MCF 10A (cell line): ENCODE measurements at regions of chr12 and their contacts with region 1.

Region 1: GRCh38 chr12:64890873-64891468 is 66.5 kb downstream of the TBC1D30 start:
- DNase-seq: peak; percentile 71
- H3K4me3 Mint-ChIP-seq: no peak overlapping the region
- H3K27ac Mint-ChIP-seq: no peak overlapping the region
- H3K4me1 Mint-ChIP-seq: peaks cover 6% of the 10 kb centered on the region
- H3K27me3 Mint-ChIP-seq: peaks cover 15% of the 10 kb centered on the region
- CTCF ChIP-seq: peak; percentile 58

Region 2: DNA sequence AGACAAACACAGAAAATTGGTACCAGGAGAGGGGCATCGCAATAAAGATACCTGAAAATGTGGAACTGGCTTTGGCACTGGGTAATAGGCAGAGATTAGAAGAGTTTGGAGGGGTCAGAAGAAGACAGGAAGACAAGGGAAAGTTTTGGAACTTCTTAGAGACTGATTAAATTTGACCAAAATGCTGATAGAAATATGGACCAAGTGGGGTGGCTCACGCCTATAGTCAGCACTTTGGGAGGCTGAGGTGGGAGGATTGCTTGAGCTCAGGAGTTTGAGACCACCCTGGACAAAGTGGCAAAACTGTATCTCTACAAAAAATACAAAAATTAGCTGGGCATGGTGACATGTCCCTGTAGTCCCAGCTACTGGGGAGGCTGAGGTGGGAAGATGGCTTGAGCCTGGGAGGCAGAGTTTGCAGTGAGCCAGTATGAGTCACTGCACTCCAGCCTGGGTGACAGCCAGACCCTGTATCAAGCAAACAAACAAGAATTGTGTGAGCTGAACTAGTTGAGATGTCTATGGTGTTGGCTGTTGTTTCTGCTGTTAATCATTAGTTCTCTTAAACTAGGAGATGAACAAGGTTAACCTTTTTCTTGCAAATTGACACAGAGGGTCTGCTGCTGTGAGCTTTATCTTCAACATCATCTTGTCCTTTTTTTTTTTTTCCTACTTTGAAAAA is 257.2 kb before region 1 on chr12:
- CTCF ChIA-PET with region 1: no interaction called
- POLR2A ChIA-PET with region 1: no interaction called
- intact Hi-C with region 1: no loop called
- DNase-seq: peak; percentile 73
- H3K4me3 Mint-ChIP-seq: no peak overlapping the region
- H3K27ac Mint-ChIP-seq: no peak overlapping the region
- H3K4me1 Mint-ChIP-seq: peaks cover 30% of the 10 kb centered on the region
- H3K27me3 Mint-ChIP-seq: no peaks in the 10 kb centered on the region
- CTCF ChIP-seq: no peak

Region 3: DNA sequence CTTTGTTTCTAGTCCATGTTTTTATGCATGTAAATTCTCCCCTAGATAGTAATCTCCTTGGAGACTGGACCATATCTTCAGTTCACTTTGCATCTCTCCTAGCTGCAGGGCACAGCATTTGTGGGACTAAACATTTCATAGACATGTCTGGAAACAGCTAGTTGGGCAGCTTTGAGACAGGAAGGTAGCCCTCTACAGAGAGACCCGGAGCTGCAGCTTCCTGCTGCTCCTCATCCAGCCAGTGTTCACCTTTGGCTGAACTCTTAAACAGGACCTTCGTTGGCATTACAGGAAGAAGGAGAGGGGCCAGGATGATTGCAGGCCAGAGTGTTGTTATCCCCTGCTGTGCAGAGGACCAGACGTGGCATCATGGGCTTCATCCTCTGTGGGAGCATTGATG is 184.7 kb before region 1 on chr12:
- CTCF ChIA-PET with region 1: no interaction called
- POLR2A ChIA-PET with region 1: no interaction called
- intact Hi-C with region 1: no loop called
- DNase-seq: no peak
- H3K4me3 Mint-ChIP-seq: no peak overlapping the region
- H3K27ac Mint-ChIP-seq: no peak overlapping the region
- H3K4me1 Mint-ChIP-seq: no peaks in the 10 kb centered on the region
- H3K27me3 Mint-ChIP-seq: no peaks in the 10 kb centered on the region
- CTCF ChIP-seq: no peak

Region 4: GRCh38 chr12:64796208-64796845 is 94.6 kb before region 1 on chr12:
- CTCF ChIA-PET with region 1: interaction called, 37 read pairs
- POLR2A ChIA-PET with region 1: no interaction called
- intact Hi-C with region 1: no loop called
- DNase-seq: peak; percentile 92
- H3K4me3 Mint-ChIP-seq: no peak overlapping the region
- H3K27ac Mint-ChIP-seq: no peak overlapping the region
- H3K4me1 Mint-ChIP-seq: peaks cover 5% of the 10 kb centered on the region
- H3K27me3 Mint-ChIP-seq: no peaks in the 10 kb centered on the region
- CTCF ChIP-seq: peak; percentile 65

Region 5: DNA sequence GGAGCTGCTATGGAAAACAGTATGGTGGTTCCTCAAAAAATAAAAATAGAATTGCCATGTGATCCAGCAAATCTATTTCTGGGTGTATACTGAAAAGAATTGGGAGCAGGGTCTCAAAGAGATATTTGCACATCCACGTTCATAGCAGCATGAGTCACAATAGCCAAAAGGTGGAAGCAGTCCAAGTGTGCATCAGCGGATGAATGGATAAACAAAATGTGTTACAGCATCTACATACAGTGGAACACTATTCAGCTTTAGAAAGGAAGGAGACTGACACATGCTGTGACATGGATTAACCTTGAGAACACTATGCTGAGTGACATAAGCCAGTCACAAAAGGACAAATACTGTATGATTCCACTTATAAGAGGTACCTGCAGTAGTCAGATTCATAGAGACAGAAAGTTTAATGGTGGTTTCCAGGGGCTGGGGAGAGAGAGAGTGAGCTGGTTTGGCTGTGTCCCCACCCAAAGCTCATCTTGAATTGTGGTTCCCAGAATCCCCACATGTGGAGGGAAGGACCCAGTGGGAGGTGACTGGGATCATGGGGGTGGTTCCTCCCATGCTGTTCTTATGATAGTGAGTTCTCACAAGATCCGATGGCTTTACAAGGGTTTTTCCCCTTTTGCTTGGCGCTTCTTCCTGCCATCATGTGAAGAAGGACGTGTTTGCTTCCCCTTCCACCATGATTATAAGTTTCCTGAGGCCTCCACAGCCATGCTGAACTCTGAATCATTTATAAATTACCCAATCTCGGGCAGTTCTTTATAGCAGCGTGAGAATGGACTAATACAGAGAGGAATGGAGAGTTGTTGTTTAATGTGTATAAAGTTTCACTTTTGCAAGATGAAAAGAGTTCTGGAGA is 84.1 kb before region 1 on chr12:
- CTCF ChIA-PET with region 1: interaction called, 37 read pairs
- POLR2A ChIA-PET with region 1: interaction called, 4 read pairs
- intact Hi-C with region 1: loop called (anchors 1 kb)
- DNase-seq: peak; percentile 93
- H3K4me3 Mint-ChIP-seq: no peak overlapping the region
- H3K27ac Mint-ChIP-seq: peak overlapping the region; percentile 46
- H3K4me1 Mint-ChIP-seq: peaks cover 36% of the 10 kb centered on the region
- H3K27me3 Mint-ChIP-seq: no peaks in the 10 kb centered on the region
- CTCF ChIP-seq: no peak

Region 6: DNA sequence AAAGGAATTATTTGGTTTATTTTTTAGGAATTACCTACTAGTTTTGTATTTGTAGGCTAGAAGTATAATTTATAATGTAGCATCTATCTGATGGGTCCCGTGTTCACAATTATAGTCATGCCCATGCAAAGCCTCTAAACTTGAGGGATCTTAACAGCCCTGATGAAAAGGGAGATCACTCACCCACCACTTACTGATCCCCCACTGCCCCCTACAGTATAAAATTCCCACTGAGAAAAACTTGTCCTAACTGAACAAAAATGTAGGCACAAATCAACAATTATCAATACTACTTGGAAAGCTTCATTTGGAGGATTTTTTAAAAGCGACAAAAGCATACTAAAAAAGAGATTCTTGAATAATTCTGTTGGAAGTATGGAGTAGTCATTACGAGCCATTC is 209.2 kb after region 1 on chr12:
- CTCF ChIA-PET with region 1: interaction called, 131 read pairs
- POLR2A ChIA-PET with region 1: interaction called, 3 read pairs
- intact Hi-C with region 1: loop called (anchors 1 kb)
- DNase-seq: peak; percentile 22
- H3K4me3 Mint-ChIP-seq: no peak overlapping the region
- H3K27ac Mint-ChIP-seq: no peak overlapping the region
- H3K4me1 Mint-ChIP-seq: no peaks in the 10 kb centered on the region
- H3K27me3 Mint-ChIP-seq: peaks cover 63% of the 10 kb centered on the region
- CTCF ChIP-seq: peak; percentile 15

Region 7: DNA sequence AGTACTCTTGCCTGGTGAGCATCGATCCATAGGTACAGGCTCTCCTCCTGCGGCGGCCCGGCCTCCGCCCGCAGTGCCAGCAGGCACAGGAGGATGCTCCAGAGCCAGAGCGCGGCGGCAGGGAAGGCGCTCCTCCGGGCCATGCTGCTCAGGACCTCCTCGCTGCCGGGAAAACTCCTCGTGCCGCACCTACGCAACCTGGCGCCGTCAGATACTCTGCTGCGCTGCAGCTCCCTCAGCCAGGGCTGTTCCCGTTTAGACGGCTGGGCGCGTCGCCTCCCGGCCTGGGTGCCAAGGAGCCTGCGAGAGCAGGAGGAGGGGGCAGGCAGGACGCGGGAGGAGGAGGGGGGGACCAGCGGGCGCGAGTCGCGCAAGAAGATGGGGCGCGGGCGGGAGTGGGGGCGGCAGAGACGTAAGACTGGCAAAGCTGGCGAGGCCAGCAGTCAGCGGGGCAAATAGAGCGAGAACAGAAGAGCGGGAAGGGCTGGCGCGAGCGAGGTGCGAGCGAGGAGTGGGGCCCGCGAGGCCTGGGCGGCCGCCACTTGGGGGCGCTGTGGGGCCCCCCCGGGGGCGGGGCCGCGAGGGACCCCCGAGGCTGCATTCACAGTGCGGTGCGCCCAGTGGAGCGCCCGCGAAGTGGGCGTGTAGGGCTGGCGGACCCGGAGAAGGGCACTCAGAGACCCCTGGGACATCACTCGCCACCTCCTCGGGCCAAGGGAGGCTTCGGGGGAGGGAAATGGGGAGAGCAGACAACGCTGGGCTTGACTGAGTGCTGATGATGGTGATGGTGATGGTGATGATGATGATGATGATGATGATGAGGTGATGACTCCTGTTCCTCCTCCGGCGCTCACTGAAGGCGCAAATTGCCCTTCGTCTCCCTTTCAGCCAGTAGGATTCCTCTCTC is 230.3 kb after region 1 on chr12 and contains the start of gene WIF1:
- CTCF ChIA-PET with region 1: interaction called, 86 read pairs
- POLR2A ChIA-PET with region 1: interaction called, 3 read pairs
- intact Hi-C with region 1: loop called (anchors 1 kb)
- DNase-seq: no peak
- H3K4me3 Mint-ChIP-seq: no peak within 1 kb of the TSS
- H3K27ac Mint-ChIP-seq: no peak within 1 kb of the TSS
- H3K4me1 Mint-ChIP-seq: no peaks in the 10 kb centered on the region
- H3K27me3 Mint-ChIP-seq: peaks cover 68% of the 10 kb centered on the region
- CTCF ChIP-seq: peak; percentile 43
- total RNA-seq, gene WIF1: not detected in 2 replicates

Region 8: DNA sequence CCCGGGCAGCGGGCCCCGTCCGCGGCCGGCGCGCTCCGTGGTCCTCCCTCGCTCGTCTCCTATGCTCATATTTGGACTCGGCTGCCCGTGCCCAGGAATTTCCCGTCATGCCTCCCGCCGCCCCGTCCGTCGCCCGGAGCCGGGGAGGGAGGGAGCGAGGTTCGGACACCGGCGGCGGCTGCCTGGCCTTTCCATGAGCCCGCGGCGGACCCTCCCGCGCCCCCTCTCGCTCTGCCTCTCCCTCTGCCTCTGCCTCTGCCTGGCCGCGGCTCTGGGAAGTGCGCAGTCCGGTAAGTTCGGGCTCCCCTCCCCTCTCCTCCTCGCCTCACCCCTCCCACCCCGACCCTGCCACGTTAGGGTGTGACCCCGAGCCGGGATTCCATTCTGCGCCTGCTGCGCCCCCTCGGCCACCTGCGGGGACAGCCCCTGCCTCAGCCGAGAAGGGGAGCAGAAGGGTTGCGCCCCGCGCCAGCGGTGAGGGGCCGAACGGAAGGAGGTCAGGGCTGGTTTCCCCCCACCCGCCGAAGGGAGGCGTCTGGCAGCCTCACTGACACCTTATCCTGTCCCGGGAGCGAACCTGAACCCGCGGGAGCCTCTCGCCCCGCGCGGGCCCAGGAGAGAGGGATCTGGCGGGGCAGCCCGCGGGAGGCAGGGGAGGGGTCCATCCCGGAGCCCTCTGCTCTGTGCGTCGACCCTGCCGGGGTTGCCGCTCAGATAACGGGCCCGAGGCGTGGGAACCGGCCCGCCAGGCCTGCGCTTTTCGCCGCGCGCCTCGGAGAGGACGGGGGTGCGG is 387.8 kb after region 1 on chr12 and contains the start of gene MSRB3:
- CTCF ChIA-PET with region 1: interaction called, 4 read pairs
- POLR2A ChIA-PET with region 1: no interaction called
- intact Hi-C with region 1: loop called (anchors 2 kb)
- DNase-seq: peak; percentile 66
- H3K4me3 Mint-ChIP-seq: peak within 1 kb of the TSS; percentile 66
- H3K27ac Mint-ChIP-seq: peak within 1 kb of the TSS; percentile 13
- H3K4me1 Mint-ChIP-seq: peaks cover 16% of the 10 kb centered on the region
- H3K27me3 Mint-ChIP-seq: no peaks in the 10 kb centered on the region
- CTCF ChIP-seq: peak; percentile 24
- total RNA-seq, gene MSRB3: 31.1 and 35.1 TPM in 2 replicates